ENCODE measurements at regions of chr17 and their contacts with region 1.

Region 1: GRCh38 chr17:40615295-40615988 is 32.2 kb downstream of the SMARCE1 start:
- DNase-seq: peak; percentile 49 to 77
- H3K4me3 ChIP-seq: no peak overlapping the region
- H3K27ac ChIP-seq: no peak overlapping the region
- H3K4me1 ChIP-seq: no peaks in the 10 kb centered on the region
- H3K27me3 ChIP-seq: no peaks in the 10 kb centered on the region
- CTCF ChIP-seq: peak; percentile 73 to 86 (median 74)
- EP300 ChIP-seq: no peak
- POLR2A ChIP-seq: no peak
- RAD21 ChIP-seq: peak; percentile 87 to 89

Region 2: GRCh38 chr17:40323391-40324381 is 291.8 kb before region 1 on chr17:
- CTCF ChIA-PET with region 1: no interaction called
- POLR2A ChIA-PET with region 1: no interaction called
- DNase-seq: no peak
- H3K4me3 ChIP-seq: no peak overlapping the region
- H3K27ac ChIP-seq: no peak overlapping the region
- H3K4me1 ChIP-seq: peaks cover 0 to 22% (median 15%) of the 10 kb centered on the region in 4 experiments; a peak in 6 of 7 replicates
- H3K27me3 ChIP-seq: peaks cover 0 to 11% (median 5%) of the 10 kb centered on the region in 4 experiments; a peak in 5 of 7 replicates
- CTCF ChIP-seq: no peak
- EP300 ChIP-seq: no peak
- POLR2A ChIP-seq: no peak
- RAD21 ChIP-seq: no peak

Region 3: GRCh38 chr17:40602775-40603551 is 12.5 kb before region 1 on chr17:
- CTCF ChIA-PET with region 1: interaction called, 32 read pairs
- POLR2A ChIA-PET with region 1: no interaction called
- DNase-seq: no peak
- H3K4me3 ChIP-seq: no peak overlapping the region
- H3K27ac ChIP-seq: no peak overlapping the region
- H3K4me1 ChIP-seq: peaks cover 1 to 9% (median 3%) of the 10 kb centered on the region in 4 experiments
- H3K27me3 ChIP-seq: no peaks in the 10 kb centered on the region; a peak in 1 of 7 replicates
- CTCF ChIP-seq: no peak
- EP300 ChIP-seq: no peak
- POLR2A ChIP-seq: no peak
- RAD21 ChIP-seq: no peak

Region 4: DNA sequence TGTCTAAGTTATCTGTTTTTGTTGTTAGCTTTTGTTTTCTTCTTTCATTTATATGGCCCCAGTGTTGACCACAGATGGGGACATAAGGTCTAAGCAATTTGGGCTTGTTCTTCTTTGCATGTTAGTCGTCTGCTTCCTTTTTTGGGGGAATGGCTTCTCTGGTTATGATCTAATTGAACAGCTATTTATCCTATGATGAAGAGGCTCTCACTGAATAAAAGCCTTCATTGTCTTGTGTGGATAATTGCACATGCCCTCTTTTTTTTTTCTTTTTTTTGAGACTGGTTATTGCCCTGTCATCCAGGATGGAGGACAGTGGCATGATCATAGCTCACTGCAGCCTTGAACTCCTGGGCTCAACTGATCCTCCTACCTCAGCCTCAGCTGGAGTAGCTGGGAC is 18.4 kb after region 1 on chr17:
- CTCF ChIA-PET with region 1: interaction called, 43 read pairs
- POLR2A ChIA-PET with region 1: interaction called, 5 read pairs
- DNase-seq: no peak
- H3K4me3 ChIP-seq: no peak overlapping the region
- H3K27ac ChIP-seq: no peak overlapping the region
- H3K4me1 ChIP-seq: no peaks in the 10 kb centered on the region
- H3K27me3 ChIP-seq: no peaks in the 10 kb centered on the region
- CTCF ChIP-seq: no peak
- EP300 ChIP-seq: no peak
- POLR2A ChIP-seq: no peak
- RAD21 ChIP-seq: no peak

Region 5: DNA sequence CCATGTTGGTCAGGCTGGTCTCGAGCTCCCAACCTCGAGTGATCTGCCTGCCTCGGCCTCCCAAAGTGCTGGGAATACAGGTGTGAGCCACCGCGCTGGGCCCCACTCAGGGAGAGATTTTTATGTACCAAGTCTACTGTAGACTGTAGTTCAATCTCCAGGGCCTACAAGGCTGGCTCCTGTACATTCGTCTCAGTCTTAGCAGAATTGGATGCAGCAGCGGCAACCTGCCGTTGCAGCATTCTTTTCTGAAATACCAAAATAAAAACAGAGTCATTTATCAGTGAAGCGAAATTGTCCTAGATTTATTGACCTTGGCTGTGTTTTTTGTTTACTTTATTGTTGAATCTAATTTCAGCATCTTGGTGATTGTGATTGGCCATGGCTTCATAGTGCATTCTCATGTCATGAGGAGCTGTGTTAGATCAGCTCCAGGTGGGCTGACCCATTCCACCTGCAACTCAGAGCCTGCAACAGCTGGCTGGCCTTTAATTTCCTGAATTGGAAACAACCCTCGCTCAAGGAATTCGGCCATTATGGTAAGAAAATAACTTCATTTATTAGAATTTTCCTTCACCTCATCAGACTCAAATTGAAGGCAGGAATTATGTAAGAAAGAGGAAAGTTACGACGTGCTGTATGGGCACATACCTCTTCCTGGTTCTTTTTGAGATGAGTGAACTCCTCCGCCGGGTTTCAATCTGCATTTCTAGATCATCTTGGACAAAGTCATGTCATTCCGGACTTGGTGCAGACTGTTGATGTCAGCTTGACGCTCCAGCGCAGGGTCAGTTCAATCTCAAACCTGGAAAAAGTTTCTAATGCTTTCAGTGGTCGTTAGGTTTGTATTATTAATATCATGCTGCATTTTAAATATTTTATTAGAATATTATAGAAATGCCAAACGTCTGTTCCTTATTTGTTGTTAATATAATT is 71.7 kb after region 1 on chr17:
- CTCF ChIA-PET with region 1: no interaction called
- POLR2A ChIA-PET with region 1: no interaction called
- DNase-seq: no peak
- H3K4me3 ChIP-seq: no peak overlapping the region
- H3K27ac ChIP-seq: no peak overlapping the region
- H3K4me1 ChIP-seq: no peaks in the 10 kb centered on the region
- H3K27me3 ChIP-seq: no peaks in the 10 kb centered on the region; a peak in 1 of 7 replicates
- CTCF ChIP-seq: no peak
- EP300 ChIP-seq: no peak
- POLR2A ChIP-seq: no peak
- RAD21 ChIP-seq: no peak

Region 6: GRCh38 chr17:40791787-40792436 is 176.5 kb after region 1 on chr17:
- CTCF ChIA-PET with region 1: interaction called, 17 read pairs
- POLR2A ChIA-PET with region 1: no interaction called
- DNase-seq: no peak
- H3K4me3 ChIP-seq: no peak overlapping the region
- H3K27ac ChIP-seq: no peak overlapping the region
- H3K4me1 ChIP-seq: no peaks in the 10 kb centered on the region
- H3K27me3 ChIP-seq: no peaks in the 10 kb centered on the region
- CTCF ChIP-seq: peak in 2 of 3 experiments; percentile 57 to 61; a peak in 3 of 4 replicates
- EP300 ChIP-seq: no peak
- POLR2A ChIP-seq: no peak
- RAD21 ChIP-seq: peak; percentile 66